MCF 10A (cell line): ENCODE measurements at regions of chr2 and their contacts with region 1.

Region 1: GRCh38 chr2:199019898-199020507 is 437.7 kb downstream of the SATB2 start:
- DNase-seq: peak; percentile 46
- H3K4me3 Mint-ChIP-seq: no peak overlapping the region
- H3K27ac Mint-ChIP-seq: no peak overlapping the region
- H3K4me1 Mint-ChIP-seq: no peaks in the 10 kb centered on the region
- H3K27me3 Mint-ChIP-seq: peaks cover 24% of the 10 kb centered on the region
- CTCF ChIP-seq: peak; percentile 32

Region 2: DNA sequence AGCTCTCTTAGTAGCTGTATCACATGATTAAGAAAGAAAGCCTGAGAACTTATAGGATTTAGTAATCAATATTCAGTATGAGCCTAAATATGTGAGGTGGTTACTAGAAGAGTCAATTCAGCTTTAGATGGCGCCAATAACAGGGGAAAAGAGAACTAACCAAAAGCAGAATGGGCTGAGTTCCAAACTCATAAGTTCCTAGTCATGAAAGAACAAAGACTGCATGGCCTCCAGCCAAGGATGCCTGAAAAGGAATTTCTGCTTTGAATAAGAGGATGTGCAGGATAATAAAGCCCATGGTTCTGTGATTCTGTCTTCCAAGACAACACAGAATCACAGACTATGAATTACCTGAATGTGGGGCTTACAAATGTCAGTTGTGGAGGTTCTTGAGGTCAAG is 241.2 kb after region 1 on chr2:
- CTCF ChIA-PET with region 1: no interaction called
- POLR2A ChIA-PET with region 1: no interaction called
- intact Hi-C with region 1: loop called (anchors 5 kb)
- DNase-seq: peak; percentile 77
- H3K4me3 Mint-ChIP-seq: no peak overlapping the region
- H3K27ac Mint-ChIP-seq: no peak overlapping the region
- H3K4me1 Mint-ChIP-seq: no peaks in the 10 kb centered on the region
- H3K27me3 Mint-ChIP-seq: no peaks in the 10 kb centered on the region
- CTCF ChIP-seq: no peak